PC-3 (cell line): ENCODE measurements at regions of chr17 and their contacts with region 1.

Region 1: GRCh38 chr17:74873038-74873873 is 462 bp upstream of the FDXR start:
- DNase-seq: peak; percentile 100
- ATAC-seq: peak; percentile 92
- H3K4me3 ChIP-seq: peak overlapping the region; percentile 97
- H3K27ac ChIP-seq: peak overlapping the region; percentile 54
- H3K4me1 ChIP-seq: peaks cover 19% of the 10 kb centered on the region
- H3K27me3 ChIP-seq: no peaks in the 10 kb centered on the region
- CTCF ChIP-seq: no peak

Region 2: GRCh38 chr17:74842599-74843351 is 30.5 kb before region 1 on chr17:
- CTCF ChIA-PET with region 1: interaction called, 10 read pairs
- POLR2A ChIA-PET with region 1: interaction called, 7 read pairs
- intact Hi-C with region 1: no loop called
- DNase-seq: peak; percentile 82
- ATAC-seq: peak; percentile 90
- H3K4me3 ChIP-seq: peak overlapping the region; percentile 71
- H3K27ac ChIP-seq: no peak overlapping the region
- H3K4me1 ChIP-seq: peaks cover 6% of the 10 kb centered on the region; the same call in 1 of the 2 replicates
- H3K27me3 ChIP-seq: no peaks in the 10 kb centered on the region
- CTCF ChIP-seq: peak; percentile 61

Region 3: DNA sequence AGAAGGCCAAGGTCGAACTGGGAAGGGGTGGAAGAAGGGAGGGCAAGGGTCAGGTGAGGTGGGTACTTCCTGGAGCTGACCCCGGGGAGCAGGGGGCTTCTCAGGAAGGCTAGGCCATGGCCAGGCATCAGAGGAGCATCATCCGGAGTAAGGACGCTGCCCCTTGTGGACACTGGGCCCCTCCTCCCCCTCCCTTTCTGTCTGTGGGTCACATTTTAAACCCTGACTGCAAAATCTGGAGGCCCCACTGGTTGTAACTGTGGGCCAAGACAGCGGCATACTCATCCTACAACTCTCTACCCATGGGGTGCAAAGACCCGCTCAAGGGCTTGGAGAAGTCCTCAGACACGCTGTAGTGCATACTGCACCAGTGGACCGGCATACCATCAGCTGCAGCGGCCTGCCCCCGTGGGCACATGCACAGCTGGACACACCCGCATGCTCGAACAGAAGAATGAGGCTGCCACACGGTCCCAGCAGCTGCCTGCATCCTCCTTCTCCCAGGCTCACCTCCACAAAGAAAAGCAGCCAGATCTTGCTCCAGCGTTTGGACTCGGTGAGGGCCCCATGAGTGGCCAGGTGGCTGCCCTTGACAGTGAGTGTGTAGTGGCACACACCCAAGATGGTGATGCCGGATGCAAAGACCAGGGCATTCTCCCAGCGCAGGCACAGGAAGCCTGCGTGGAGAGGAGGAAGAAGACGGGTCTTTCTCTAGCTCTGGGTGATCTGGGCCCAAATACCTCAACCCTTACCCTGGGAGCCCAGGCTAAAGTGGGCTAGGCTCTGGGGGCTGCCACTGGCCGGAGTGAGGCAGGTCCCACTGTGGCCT is 19.0 kb after region 1 on chr17:
- CTCF ChIA-PET with region 1: no interaction called
- POLR2A ChIA-PET with region 1: interaction called, 12 read pairs
- intact Hi-C with region 1: no loop called
- DNase-seq: no peak
- ATAC-seq: peak; percentile 23
- H3K4me3 ChIP-seq: no peak overlapping the region
- H3K27ac ChIP-seq: no peak overlapping the region
- H3K4me1 ChIP-seq: no peaks in the 10 kb centered on the region
- H3K27me3 ChIP-seq: peaks cover 53% of the 10 kb centered on the region
- CTCF ChIP-seq: peak; percentile 29; the same call in 1 of the 2 replicates

Region 4: DNA sequence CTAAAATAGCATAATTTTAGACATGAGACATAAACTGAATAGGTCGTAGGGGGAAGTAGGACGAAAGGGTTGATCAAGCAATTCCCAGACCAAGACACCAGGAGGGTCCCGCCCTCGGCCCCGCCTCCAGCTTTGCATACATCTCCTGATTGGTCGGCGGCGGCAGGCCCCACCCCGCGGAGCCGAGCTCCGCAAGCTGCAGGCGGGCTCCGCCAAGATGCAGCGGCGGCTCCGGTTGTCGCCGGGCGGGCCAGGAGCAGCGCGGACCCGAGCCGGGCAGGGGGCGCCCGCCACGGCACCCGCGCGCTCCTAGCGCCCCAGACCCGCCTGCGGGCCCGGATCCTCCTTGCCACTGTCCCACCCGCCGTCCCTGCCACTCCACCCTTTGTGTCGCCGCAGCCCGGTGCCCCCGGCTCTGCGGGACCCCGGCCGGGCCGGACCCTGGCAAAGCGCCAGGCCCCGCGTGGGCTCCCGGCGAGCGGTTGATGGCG is 114.2 kb after region 1 on chr17 and contains the start of gene CDR2L:
- CTCF ChIA-PET with region 1: interaction called, 10 read pairs
- POLR2A ChIA-PET with region 1: no interaction called
- intact Hi-C with region 1: no loop called
- DNase-seq: peak; percentile 97
- ATAC-seq: peak; percentile 84
- H3K4me3 ChIP-seq: peak within 1 kb of the TSS; percentile 84
- H3K27ac ChIP-seq: peak within 1 kb of the TSS; percentile 17
- H3K4me1 ChIP-seq: peaks cover 22% of the 10 kb centered on the region
- H3K27me3 ChIP-seq: no peaks in the 10 kb centered on the region
- CTCF ChIP-seq: no peak
- total RNA-seq, gene CDR2L: 35.8 and 50.9 TPM in 2 replicates

Region 5: GRCh38 chr17:75087558-75088453 is 214.6 kb after region 1 on chr17 and contains the start of gene SLC16A5:
- CTCF ChIA-PET with region 1: no interaction called
- POLR2A ChIA-PET with region 1: interaction called, 46 read pairs
- intact Hi-C with region 1: no loop called
- DNase-seq: no peak
- ATAC-seq: no peak
- H3K4me3 ChIP-seq: no peak within 1 kb of the TSS
- H3K27ac ChIP-seq: no peak within 1 kb of the TSS
- H3K4me1 ChIP-seq: peaks cover 20% of the 10 kb centered on the region
- H3K27me3 ChIP-seq: no peaks in the 10 kb centered on the region
- CTCF ChIP-seq: no peak
- total RNA-seq, gene SLC16A5: 1.2 and 1.6 TPM in 2 replicates

Region 6: GRCh38 chr17:75168998-75169397 is 295.7 kb after region 1 on chr17:
- CTCF ChIA-PET with region 1: no interaction called
- POLR2A ChIA-PET with region 1: no interaction called
- intact Hi-C with region 1: no loop called
- DNase-seq: no peak
- ATAC-seq: no peak
- H3K4me3 ChIP-seq: no peak overlapping the region
- H3K27ac ChIP-seq: no peak overlapping the region
- H3K4me1 ChIP-seq: no peaks in the 10 kb centered on the region
- H3K27me3 ChIP-seq: no peaks in the 10 kb centered on the region
- CTCF ChIP-seq: no peak